Esophagus muscularis mucosa (tissue), 4 donors: ENCODE measurements at regions of chrX and their contacts with region 1.

Region 1: DNA sequence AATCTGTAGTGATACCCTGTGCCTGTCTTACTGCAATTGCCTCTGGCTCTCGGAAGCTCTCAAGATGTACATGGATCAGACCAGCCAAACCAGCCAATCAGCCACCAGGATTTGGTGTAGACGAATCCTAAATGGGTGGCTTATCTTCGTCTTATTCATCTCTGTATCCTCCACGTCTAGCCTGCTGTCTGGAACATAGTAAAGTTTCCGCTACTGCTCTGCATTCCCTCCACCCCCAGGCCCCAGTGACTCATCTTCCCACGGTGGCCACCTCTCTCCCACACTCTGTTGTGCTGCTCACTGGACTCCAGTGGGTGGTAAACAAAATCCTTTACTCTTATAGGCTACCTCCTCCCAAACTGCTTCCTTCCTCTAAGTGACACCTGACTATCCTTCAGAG is 37.8 kb downstream of the SEPTIN6 start:
- DNase-seq: no peak
- H3K4me3 ChIP-seq: no peak overlapping the region
- H3K27ac ChIP-seq: peak overlapping the region in 3 of 4 donors; percentile 50 to 74 (median 58)
- H3K4me1 ChIP-seq: peaks cover 0 to 17% (median 10%) of the 10 kb centered on the region in 4 donors
- H3K27me3 ChIP-seq: peaks cover 0 to 3% (median 0%) of the 10 kb centered on the region in 4 donors
- CTCF ChIP-seq: no peak
- EP300 ChIP-seq: no peak
- POLR2A ChIP-seq: no peak

Region 2: DNA sequence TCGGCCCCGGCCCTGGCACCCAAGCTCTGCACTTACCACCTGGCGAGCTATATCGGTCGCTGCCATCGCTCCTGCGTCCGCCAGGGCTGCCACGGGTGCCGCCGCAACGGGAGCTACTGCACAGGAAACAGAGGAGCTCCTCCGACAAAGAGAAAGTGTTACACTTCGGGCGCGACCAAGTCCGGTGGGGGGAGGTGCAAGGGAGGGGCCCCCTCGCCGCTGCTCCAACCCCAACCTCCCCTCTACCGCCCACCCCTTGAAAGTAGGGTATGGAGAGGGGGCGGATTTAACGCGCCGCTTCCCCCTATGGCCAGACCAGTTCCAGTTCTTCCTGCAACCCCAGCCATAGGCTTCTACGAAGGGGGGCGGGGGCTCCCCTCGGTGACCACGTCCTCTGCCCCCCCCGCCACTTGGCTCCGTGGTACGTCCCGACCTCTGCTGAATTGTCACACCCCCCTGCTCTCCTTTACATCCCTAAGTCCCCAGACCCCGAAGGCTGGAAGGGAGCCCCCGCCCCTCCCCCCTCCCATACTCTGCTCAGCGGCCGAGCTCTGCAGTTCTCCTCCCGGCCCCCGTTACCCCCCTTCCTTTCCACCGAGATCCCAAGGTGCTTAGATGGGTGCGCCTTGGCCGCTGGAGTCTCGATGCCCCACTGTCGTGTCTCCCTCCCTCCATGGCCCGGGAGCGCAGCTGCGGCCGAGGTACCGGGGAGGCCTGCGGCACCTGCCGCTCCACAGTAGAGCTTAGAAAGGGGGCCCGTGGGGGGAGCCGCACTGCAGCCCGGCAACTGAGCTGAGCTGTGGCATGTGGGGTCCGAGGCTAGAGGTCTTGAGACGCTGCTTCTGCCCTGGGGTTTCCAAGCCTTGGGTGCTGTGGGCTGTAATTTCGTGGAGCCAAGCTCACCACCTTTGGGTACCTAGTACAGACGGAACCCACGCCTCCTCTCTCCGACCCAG is 38.2 kb after region 1 on chrX and contains the start of gene SEPTIN6:
- intact Hi-C with region 1: loop called (anchors 5 kb)
- DNase-seq: no peak
- H3K4me3 ChIP-seq: peak within 1 kb of the TSS; percentile 68 to 81 (median 72)
- H3K27ac ChIP-seq: peak within 1 kb of the TSS; percentile 84 to 89 (median 88)
- H3K4me1 ChIP-seq: peaks cover 0 to 27% (median 25%) of the 10 kb centered on the region in 4 donors
- H3K27me3 ChIP-seq: peaks cover 0 to 5% (median 0%) of the 10 kb centered on the region in 4 donors
- CTCF ChIP-seq: peak in 1 of 3 experiments; percentile 17
- EP300 ChIP-seq: no peak
- POLR2A ChIP-seq: peak; percentile 35
- total RNA-seq, gene SEPTIN6: 51.5 to 67.2 (median 60.5) TPM

Region 3: GRCh38 chrX:119729408-119730201 is 74.5 kb after region 1 on chrX:
- intact Hi-C with region 1: loop called (anchors 2 kb)
- DNase-seq: no peak
- H3K4me3 ChIP-seq: no peak overlapping the region
- H3K27ac ChIP-seq: no peak overlapping the region
- H3K4me1 ChIP-seq: peaks cover 0 to 2% (median 1%) of the 10 kb centered on the region in 4 donors
- H3K27me3 ChIP-seq: no peaks in the 10 kb centered on the region
- CTCF ChIP-seq: peak; percentile 50 to 60 (median 59)
- EP300 ChIP-seq: no peak
- POLR2A ChIP-seq: no peak